ENCODE measurements at regions of chr6 and their contacts with region 1.

Region 1: GRCh38 chr6:31139599-31139998 is 733 bp upstream of the PSORS1C2 start:
- DNase-seq: no peak
- H3K4me3 ChIP-seq: no peak overlapping the region
- CTCF ChIP-seq: no peak
- POLR2A ChIP-seq: no peak

Region 2: DNA sequence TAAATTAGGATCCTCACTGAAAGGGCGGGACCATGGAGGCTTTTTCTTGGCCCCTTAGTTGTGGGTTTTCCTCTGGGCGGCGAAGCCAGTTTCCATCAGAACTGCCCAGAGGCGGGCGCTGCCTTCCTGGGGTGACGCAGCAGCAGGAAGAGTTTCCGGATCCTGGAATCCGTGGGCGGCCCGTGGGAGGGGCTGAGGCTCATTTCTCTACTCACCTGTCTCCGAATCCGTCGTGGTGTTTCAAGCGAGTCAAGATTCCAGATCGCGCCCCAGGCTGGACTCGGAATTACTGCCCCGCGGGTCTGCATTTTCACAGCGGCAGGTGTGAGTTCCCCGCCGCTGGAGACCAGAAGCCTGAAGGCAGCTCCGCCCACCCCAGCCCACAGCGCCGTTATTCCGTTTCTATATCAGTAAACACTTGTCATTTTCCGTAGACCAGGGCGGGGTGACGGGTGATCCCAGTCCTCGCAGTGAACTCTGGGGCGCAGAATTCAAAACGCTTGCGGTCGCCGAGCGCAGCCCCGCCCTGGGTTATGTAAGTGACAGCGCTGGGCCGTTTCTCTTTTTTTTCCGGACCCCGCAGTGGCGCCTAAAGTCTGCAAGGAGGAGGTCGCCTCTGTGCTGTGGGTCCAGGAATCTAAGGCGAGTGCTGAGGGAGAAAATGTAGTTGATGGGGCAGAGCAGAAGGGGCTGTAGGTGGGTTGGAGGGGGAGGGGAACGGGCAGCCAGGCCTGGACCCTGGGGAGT is 58.1 kb after region 1 on chr6:
- intact Hi-C with region 1: loop called (anchors 5 kb)
- DNase-seq: peak; percentile 92 to 98
- H3K4me3 ChIP-seq: peak overlapping the region; percentile 62
- CTCF ChIP-seq: no peak
- POLR2A ChIP-seq: peak in 1 of 2 donors; percentile 30

Region 3: DNA sequence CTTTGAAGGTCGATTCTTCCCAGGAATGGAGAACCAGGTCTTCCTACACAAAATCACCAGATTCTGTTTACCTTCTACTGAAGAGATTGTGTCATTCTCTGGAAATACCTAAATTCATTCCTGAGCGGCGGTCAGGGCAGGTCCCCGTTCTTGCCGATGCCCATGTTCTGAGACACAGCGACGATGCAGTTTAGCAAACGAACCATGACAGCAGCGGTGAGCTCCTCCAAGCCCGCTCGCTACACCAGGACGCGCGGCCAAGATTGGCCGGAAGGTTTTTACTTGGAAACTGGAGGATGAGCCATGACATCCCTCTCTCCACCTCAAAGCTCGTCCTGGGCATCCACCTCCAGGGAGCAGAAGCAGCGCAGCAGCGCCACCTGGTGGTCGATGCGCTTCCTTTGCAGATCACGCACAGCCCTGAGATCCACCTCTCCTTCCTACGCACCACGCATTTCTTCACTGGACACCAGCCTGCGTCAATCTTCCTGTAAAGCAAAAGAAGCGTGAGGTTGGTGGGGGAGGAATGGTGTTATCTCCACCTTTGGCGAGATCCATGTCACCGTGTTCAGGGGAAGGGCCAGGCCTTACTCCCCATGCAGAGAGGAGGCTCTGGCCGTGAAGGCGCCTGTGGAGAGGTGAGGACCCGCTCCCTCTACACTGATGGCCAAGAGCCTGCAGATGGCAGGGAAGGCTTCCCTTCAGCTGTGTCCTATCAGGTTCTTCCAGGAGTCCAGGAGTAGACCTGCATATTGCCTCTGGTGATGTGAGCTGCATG is 227.3 kb after region 1 on chr6:
- intact Hi-C with region 1: loop called (anchors 5 kb)
- DNase-seq: peak; percentile 75 to 96
- H3K4me3 ChIP-seq: no peak overlapping the region
- CTCF ChIP-seq: peak in 1 of 3 donors; percentile 97
- POLR2A ChIP-seq: no peak

Region 4: GRCh38 chr6:31474871-31475286 is 335.3 kb after region 1 on chr6:
- intact Hi-C with region 1: no loop called
- DNase-seq: no peak
- H3K4me3 ChIP-seq: no peak overlapping the region
- CTCF ChIP-seq: no peak
- POLR2A ChIP-seq: no peak

Region 5: GRCh38 chr6:31763619-31763940 is 624.0 kb after region 1 on chr6:
- intact Hi-C with region 1: no loop called
- DNase-seq: no peak
- H3K4me3 ChIP-seq: no peak overlapping the region
- CTCF ChIP-seq: no peak
- POLR2A ChIP-seq: no peak

Measured in lower leg skin (tissue), 4 donors.